ENCODE measurements at regions of chr20 and their contacts with region 1.

Region 1: GRCh38 chr20:5529331-5530148 is 212.8 kb upstream of the PROKR2 start:
- DNase-seq: peak; percentile 92
- ATAC-seq: peak; percentile 96
- H3K4me3 Mint-ChIP-seq: peak overlapping the region; percentile 10
- H3K27ac Mint-ChIP-seq: peak overlapping the region; percentile 54
- H3K4me1 Mint-ChIP-seq: peaks cover 25% of the 10 kb centered on the region
- H3K27me3 Mint-ChIP-seq: peaks cover 13% of the 10 kb centered on the region

Region 2: GRCh38 chr20:5513975-5514516 is 15.5 kb before region 1 on chr20:
- CTCF ChIA-PET with region 1: interaction called, 19 read pairs
- DNase-seq: no peak
- ATAC-seq: no peak
- H3K4me3 Mint-ChIP-seq: no peak overlapping the region
- H3K27ac Mint-ChIP-seq: no peak overlapping the region
- H3K4me1 Mint-ChIP-seq: peaks cover 20% of the 10 kb centered on the region
- H3K27me3 Mint-ChIP-seq: no peaks in the 10 kb centered on the region

Region 3: GRCh38 chr20:5557123-5557522 is 27.6 kb after region 1 on chr20:
- CTCF ChIA-PET with region 1: interaction called, 21 read pairs
- DNase-seq: peak; percentile 77
- ATAC-seq: peak; percentile 76
- H3K4me3 Mint-ChIP-seq: no peak overlapping the region
- H3K27ac Mint-ChIP-seq: peak overlapping the region; percentile 37
- H3K4me1 Mint-ChIP-seq: no peaks in the 10 kb centered on the region
- H3K27me3 Mint-ChIP-seq: no peaks in the 10 kb centered on the region

Region 4: GRCh38 chr20:5797843-5798462 is 268.4 kb after region 1 on chr20:
- CTCF ChIA-PET with region 1: interaction called, 12 read pairs
- DNase-seq: no peak
- ATAC-seq: no peak
- H3K4me3 Mint-ChIP-seq: no peak overlapping the region
- H3K27ac Mint-ChIP-seq: no peak overlapping the region
- H3K4me1 Mint-ChIP-seq: no peaks in the 10 kb centered on the region
- H3K27me3 Mint-ChIP-seq: no peaks in the 10 kb centered on the region

Region 5: DNA sequence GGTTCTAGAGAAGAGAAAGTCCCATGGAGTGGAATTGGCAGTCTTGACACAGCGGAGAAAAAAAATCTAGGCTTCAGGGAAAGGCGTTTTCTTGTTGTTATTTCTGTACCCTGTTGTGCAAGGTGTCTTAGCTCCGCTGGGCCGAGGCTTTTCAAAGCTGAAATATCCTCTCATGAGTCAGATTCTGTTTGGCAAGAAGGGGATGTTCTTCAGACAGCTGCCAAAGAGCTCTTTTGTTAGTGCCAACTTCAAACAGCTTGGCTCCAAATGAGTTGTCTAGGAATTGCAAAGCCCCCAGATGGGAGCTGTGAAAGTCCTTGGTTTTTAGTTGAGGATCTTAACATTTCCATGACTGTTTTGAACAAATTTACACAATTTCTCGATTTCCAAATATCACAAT is 478.7 kb after region 1 on chr20:
- CTCF ChIA-PET with region 1: interaction called, 10 read pairs
- DNase-seq: no peak
- ATAC-seq: no peak
- H3K4me3 Mint-ChIP-seq: no peak overlapping the region
- H3K27ac Mint-ChIP-seq: no peak overlapping the region
- H3K4me1 Mint-ChIP-seq: peaks cover 33% of the 10 kb centered on the region
- H3K27me3 Mint-ChIP-seq: no peaks in the 10 kb centered on the region